Naive thymus-derived CD4-positive, alpha-beta T cell (primary cell): ENCODE measurements at regions of chr20 and their contacts with region 1.

Region 1: GRCh38 chr20:50804418-50805064 is 9.7 kb downstream of the BCAS4 start:
- DNase-seq: peak in 7 of 9 donors; percentile 47 to 67 (median 56)
- ATAC-seq: peak; percentile 84
- H3K4me3 ChIP-seq: peak overlapping the region; percentile 17
- H3K4me3 Mint-ChIP-seq: peak overlapping the region; percentile 38 to 83 (median 66)
- H3K27ac ChIP-seq: peak overlapping the region; percentile 64
- H3K27ac Mint-ChIP-seq: peak overlapping the region; percentile 84 to 96 (median 91)
- H3K4me1 ChIP-seq: peaks cover 15 to 16% of the 10 kb centered on the region in 2 donors
- H3K4me1 Mint-ChIP-seq: peaks cover 14 to 45% (median 44%) of the 10 kb centered on the region in 7 donors
- H3K27me3 ChIP-seq: no peaks in the 10 kb centered on the region
- H3K27me3 Mint-ChIP-seq: no peaks in the 10 kb centered on the region

Region 2: DNA sequence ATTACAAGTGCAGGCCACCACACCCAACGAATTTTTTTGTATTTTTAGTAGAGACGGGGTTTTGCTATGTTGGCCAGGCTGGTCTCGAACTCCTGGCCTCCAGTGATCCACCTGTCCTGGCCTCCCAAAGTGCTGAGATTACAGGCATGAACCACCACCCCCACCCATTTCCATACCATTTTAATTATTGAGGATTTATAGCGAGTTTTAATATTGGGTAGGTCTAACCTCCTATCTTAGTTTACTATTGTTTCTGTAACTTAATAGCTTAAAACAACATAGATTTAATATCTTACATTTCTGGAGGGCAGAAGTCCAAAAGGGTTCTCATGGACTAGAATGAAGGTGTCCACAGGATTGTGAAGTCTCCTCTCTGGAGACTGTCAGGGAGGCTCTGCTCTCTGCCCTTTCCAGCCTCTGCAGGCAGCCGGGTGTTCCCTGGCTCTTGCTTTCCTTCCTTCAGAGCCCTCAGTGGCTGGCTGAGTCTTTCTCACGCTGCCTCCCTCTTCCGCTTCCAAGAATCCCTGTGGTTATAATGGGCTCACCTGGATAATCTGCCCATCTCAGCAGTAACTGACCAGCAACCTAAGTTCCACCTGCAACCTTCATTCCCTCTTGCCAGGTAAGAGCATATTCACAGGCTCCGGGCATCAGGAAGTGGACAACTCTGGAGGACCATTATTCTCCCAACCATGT is 28.3 kb before region 1 on chr20:
- CTCF ChIA-PET with region 1: no interaction called
- POLR2A ChIA-PET with region 1: no interaction called
- intact Hi-C with region 1: no loop called
- DNase-seq: no peak
- ATAC-seq: no peak
- H3K4me3 ChIP-seq: no peak overlapping the region
- H3K4me3 Mint-ChIP-seq: no peak overlapping the region
- H3K27ac ChIP-seq: no peak overlapping the region
- H3K27ac Mint-ChIP-seq: no peak overlapping the region
- H3K4me1 ChIP-seq: no peaks in the 10 kb centered on the region
- H3K4me1 Mint-ChIP-seq: no peaks in the 10 kb centered on the region
- H3K27me3 ChIP-seq: no peaks in the 10 kb centered on the region
- H3K27me3 Mint-ChIP-seq: peaks cover 4 to 17% (median 9%) of the 10 kb centered on the region in 5 donors

Region 3: GRCh38 chr20:50815162-50815989 is 10.8 kb after region 1 on chr20:
- CTCF ChIA-PET with region 1: no interaction called
- POLR2A ChIA-PET with region 1: interaction called, 13 read pairs
- intact Hi-C with region 1: loop called in 1 of 2 experiments (anchors 1 kb)
- DNase-seq: peak in 1 of 9 donors; percentile 6
- ATAC-seq: peak; percentile 24
- H3K4me3 ChIP-seq: peak overlapping the region; percentile 25
- H3K4me3 Mint-ChIP-seq: peak overlapping the region; percentile 60 to 93 (median 80)
- H3K27ac ChIP-seq: peak overlapping the region; percentile 43
- H3K27ac Mint-ChIP-seq: peak overlapping the region; percentile 75 to 98 (median 87)
- H3K4me1 ChIP-seq: peaks cover 11 to 37% of the 10 kb centered on the region in 2 donors
- H3K4me1 Mint-ChIP-seq: peaks cover 34 to 70% (median 52%) of the 10 kb centered on the region in 7 donors
- H3K27me3 ChIP-seq: no peaks in the 10 kb centered on the region
- H3K27me3 Mint-ChIP-seq: no peaks in the 10 kb centered on the region

Region 4: GRCh38 chr20:51423290-51423667 is 618.7 kb after region 1 on chr20:
- CTCF ChIA-PET with region 1: no interaction called
- POLR2A ChIA-PET with region 1: no interaction called
- intact Hi-C with region 1: no loop called
- DNase-seq: no peak
- ATAC-seq: no peak
- H3K4me3 ChIP-seq: no peak overlapping the region
- H3K4me3 Mint-ChIP-seq: no peak overlapping the region
- H3K27ac ChIP-seq: no peak overlapping the region
- H3K27ac Mint-ChIP-seq: peak overlapping the region in 2 of 9 donors; percentile 28 to 43
- H3K4me1 ChIP-seq: peaks cover 0 to 75% of the 10 kb centered on the region in 2 donors
- H3K4me1 Mint-ChIP-seq: peaks cover 10 to 65% (median 27%) of the 10 kb centered on the region in 7 donors
- H3K27me3 ChIP-seq: no peaks in the 10 kb centered on the region
- H3K27me3 Mint-ChIP-seq: no peaks in the 10 kb centered on the region